Activated CD4-positive, alpha-beta T cell treated with anti-CD3 and anti-CD28 coated beads for 36 hours (primary cell): ENCODE measurements at regions of chr10 and their contacts with region 1.

Region 1: GRCh38 chr10:3785257-3785850 is 345 bp upstream of the KLF6 start:
- DNase-seq: peak; percentile 99
- ATAC-seq: peak; percentile 78
- H3K4me3 Mint-ChIP-seq: peak overlapping the region; percentile 82
- H3K27ac Mint-ChIP-seq: peak overlapping the region; percentile 96
- H3K4me1 Mint-ChIP-seq: peaks cover 32% of the 10 kb centered on the region
- H3K27me3 Mint-ChIP-seq: no peaks in the 10 kb centered on the region

Region 2: GRCh38 chr10:3623746-3624145 is 161.6 kb before region 1 on chr10:
- CTCF ChIA-PET with region 1: no interaction called
- POLR2A ChIA-PET with region 1: interaction called, 5 read pairs
- intact Hi-C with region 1: loop called in 1 of 2 experiments (anchors 1 kb)
- DNase-seq: no peak
- ATAC-seq: no peak
- H3K4me3 Mint-ChIP-seq: no peak overlapping the region
- H3K27ac Mint-ChIP-seq: peak overlapping the region; percentile 14
- H3K4me1 Mint-ChIP-seq: peaks cover 30% of the 10 kb centered on the region
- H3K27me3 Mint-ChIP-seq: no peaks in the 10 kb centered on the region

Region 3: DNA sequence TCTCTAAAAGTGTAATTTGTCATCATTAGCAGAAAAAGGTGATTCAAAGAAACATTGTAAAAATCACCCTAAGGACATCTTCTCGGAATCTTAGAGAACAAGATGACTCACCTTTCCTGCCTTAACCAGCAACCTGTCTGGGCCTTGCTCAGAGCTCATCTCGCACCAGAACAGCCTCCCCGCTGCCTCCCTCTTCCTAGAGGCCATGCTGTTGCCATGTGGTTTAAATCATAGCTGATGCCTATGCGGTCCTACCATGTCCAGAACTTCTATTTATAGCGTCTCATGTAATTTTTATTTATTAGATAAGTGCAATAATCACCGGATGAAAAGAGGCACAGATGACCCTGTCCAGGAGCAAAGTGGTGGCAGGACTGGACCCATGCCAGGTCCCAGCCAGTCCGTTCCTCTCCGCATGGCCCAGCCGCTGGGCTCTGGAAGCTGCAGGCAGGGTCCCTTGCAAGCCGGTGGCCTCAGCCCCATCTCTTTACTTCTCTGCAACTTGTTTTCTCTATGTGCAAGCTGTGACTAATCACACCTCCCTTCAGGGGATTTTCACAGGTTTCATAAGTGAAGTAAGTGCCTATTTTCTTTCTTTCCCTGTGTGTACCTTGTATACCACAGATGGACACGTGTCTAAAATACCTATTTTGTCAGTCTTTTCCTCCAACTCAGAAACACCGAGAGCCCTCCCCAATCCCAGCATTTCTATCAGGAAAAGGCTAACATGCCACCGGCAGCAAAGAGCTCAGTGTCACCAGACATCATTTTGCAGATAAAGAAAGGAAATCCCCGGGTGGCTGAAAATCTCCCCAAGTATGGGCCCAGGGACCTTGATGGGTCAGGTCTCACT is 27.5 kb before region 1 on chr10:
- CTCF ChIA-PET with region 1: interaction called, 4 read pairs
- POLR2A ChIA-PET with region 1: interaction called, 23 read pairs
- intact Hi-C with region 1: no loop called
- DNase-seq: peak; percentile 80
- ATAC-seq: peak; percentile 80
- H3K4me3 Mint-ChIP-seq: peak overlapping the region; percentile 66
- H3K27ac Mint-ChIP-seq: peak overlapping the region; percentile 99
- H3K4me1 Mint-ChIP-seq: peaks cover 80% of the 10 kb centered on the region
- H3K27me3 Mint-ChIP-seq: no peaks in the 10 kb centered on the region

Region 4: GRCh38 chr10:3811291-3811870 is 26.0 kb after region 1 on chr10:
- CTCF ChIA-PET with region 1: interaction called, 9 read pairs
- POLR2A ChIA-PET with region 1: interaction called, 165 read pairs
- intact Hi-C with region 1: loop called (anchors 1 kb)
- DNase-seq: peak; percentile 78
- ATAC-seq: peak; percentile 62
- H3K4me3 Mint-ChIP-seq: peak overlapping the region; percentile 42
- H3K27ac Mint-ChIP-seq: no peak overlapping the region
- H3K4me1 Mint-ChIP-seq: peaks cover 80% of the 10 kb centered on the region
- H3K27me3 Mint-ChIP-seq: no peaks in the 10 kb centered on the region

Region 5: GRCh38 chr10:3867454-3868270 is 82.3 kb after region 1 on chr10:
- CTCF ChIA-PET with region 1: no interaction called
- POLR2A ChIA-PET with region 1: interaction called, 29 read pairs
- intact Hi-C with region 1: loop called (anchors 1 to 2 kb)
- DNase-seq: peak; percentile 60
- ATAC-seq: peak; percentile 76
- H3K4me3 Mint-ChIP-seq: peak overlapping the region; percentile 10
- H3K27ac Mint-ChIP-seq: peak overlapping the region; percentile 81
- H3K4me1 Mint-ChIP-seq: peaks cover 69% of the 10 kb centered on the region
- H3K27me3 Mint-ChIP-seq: no peaks in the 10 kb centered on the region

Region 6: GRCh38 chr10:4131407-4132228 is 346.3 kb after region 1 on chr10:
- CTCF ChIA-PET with region 1: no interaction called
- POLR2A ChIA-PET with region 1: interaction called, 3 read pairs
- intact Hi-C with region 1: loop called in 1 of 2 experiments (anchors 2 kb)
- DNase-seq: peak; percentile 44
- ATAC-seq: peak; percentile 85
- H3K4me3 Mint-ChIP-seq: no peak overlapping the region
- H3K27ac Mint-ChIP-seq: no peak overlapping the region
- H3K4me1 Mint-ChIP-seq: peaks cover 41% of the 10 kb centered on the region
- H3K27me3 Mint-ChIP-seq: peaks cover 11% of the 10 kb centered on the region

Region 7: GRCh38 chr10:4656576-4657182 is 871.3 kb after region 1 on chr10:
- CTCF ChIA-PET with region 1: no interaction called
- POLR2A ChIA-PET with region 1: no interaction called
- intact Hi-C with region 1: loop called (anchors 2 to 5 kb)
- DNase-seq: peak; percentile 65
- ATAC-seq: no peak
- H3K4me3 Mint-ChIP-seq: no peak overlapping the region
- H3K27ac Mint-ChIP-seq: no peak overlapping the region
- H3K4me1 Mint-ChIP-seq: peaks cover 21% of the 10 kb centered on the region
- H3K27me3 Mint-ChIP-seq: peaks cover 9% of the 10 kb centered on the region